Left lung (tissue), 14 donors: ENCODE measurements at regions of chr1 and their contacts with region 1.

Region 1: DNA sequence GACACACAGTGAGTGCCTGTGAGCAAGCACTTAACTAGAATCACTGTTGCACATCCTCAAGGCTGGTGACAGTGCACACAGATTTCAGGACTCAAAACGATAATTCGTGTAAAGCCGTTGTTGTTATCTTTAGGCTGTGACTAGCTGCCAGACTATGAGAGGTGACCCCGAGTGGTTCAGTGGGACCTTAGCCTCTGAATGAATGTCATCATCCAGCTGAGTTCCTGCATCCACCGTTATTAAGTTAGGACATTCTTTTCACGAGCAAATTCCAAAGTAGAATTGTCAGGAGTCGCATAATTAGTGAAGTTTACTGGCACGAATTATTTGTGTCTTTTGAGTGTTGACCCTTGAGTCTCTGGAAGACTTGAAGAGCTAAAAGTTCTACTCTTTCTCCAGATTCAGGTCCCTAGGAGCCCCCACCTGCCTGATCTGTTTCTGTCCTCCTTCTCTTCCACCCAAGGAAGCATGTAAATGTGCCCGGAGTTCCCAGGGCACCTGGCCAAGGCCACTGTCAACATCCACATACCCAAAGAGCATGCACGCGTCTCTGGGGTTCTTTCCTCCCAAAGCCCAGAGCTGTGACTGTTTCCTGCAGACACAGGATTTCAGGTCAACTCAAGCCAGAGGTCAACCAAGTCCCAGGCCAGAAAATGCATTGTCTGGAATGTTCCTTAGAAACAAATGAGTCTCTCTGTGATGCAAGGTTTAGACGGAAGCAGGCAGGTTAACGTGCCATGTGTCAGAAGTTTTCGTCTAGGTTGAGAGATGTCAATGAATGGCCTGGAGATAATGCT is 207.2 kb downstream of the TOMM20 start:
- DNase-seq: no peak
- ATAC-seq: no peak
- H3K4me3 ChIP-seq: no peak overlapping the region
- H3K27ac ChIP-seq: peak overlapping the region in 1 of 2 donors; percentile 25
- H3K4me1 ChIP-seq: peaks cover 23 to 61% of the 10 kb centered on the region in 2 donors
- H3K27me3 ChIP-seq: no peaks in the 10 kb centered on the region
- CTCF ChIP-seq: no peak

Region 2: DNA sequence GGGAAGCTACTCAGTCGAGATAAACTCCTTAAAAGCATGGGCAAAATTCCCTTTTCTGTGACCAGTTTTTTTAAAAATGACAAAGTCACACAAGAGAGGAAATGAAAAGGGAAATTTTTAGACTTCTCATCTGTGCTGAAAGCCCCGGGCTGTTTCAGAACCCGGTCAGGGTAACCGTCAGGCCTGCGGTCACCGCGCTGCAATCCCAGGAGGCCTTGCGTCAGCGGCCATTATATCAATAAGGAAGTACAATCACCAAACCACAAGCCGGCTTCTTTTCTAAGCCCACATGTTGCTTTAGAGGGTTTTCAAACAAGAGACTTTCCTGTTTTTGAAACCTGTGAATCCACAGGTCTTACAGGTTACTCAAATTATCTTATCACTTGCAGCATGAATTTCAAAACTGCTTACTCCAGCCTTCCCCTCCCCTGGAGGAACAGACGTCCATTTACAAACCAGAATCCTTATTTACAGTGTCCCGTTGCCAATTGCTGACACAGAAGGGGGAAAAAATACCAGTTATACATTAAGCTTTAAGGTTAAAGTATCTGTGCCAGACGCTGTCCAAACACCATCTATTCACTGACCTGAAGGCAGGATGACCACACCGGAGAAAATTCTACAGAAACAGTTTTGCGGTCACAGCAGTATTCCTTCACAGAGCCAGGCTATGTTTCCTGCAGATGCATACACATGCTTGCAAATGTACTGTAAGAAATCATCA is 41.9 kb after region 1 on chr1:
- intact Hi-C with region 1: loop called in 1 of 2 experiments (anchors 5 kb)
- DNase-seq: peak in 3 of 4 donors; percentile 60 to 95 (median 90)
- ATAC-seq: peak; percentile 46
- H3K4me3 ChIP-seq: no peak overlapping the region
- H3K27ac ChIP-seq: peak overlapping the region; percentile 88 to 92
- H3K4me1 ChIP-seq: peaks cover 48 to 77% of the 10 kb centered on the region in 2 donors
- H3K27me3 ChIP-seq: no peaks in the 10 kb centered on the region
- CTCF ChIP-seq: no peak

Region 3: GRCh38 chr1:234987415-234988154 is 66.1 kb after region 1 on chr1:
- intact Hi-C with region 1: no loop called
- DNase-seq: peak in 3 of 4 donors; percentile 67 to 82 (median 78)
- ATAC-seq: peak; percentile 89
- H3K4me3 ChIP-seq: no peak overlapping the region
- H3K27ac ChIP-seq: peak overlapping the region; percentile 73 to 85
- H3K4me1 ChIP-seq: peaks cover 31 to 53% of the 10 kb centered on the region in 2 donors
- H3K27me3 ChIP-seq: no peaks in the 10 kb centered on the region
- CTCF ChIP-seq: no peak